Activated CD4-positive, alpha-beta memory T cell treated with anti-CD3 and anti-CD28 coated beads, Interleukin-2, amount 10 ng/mL, durations not matched to agents 7 days and 5 days (primary cell): ENCODE measurements at regions of chr2 and their contacts with region 1.

Region 1: DNA sequence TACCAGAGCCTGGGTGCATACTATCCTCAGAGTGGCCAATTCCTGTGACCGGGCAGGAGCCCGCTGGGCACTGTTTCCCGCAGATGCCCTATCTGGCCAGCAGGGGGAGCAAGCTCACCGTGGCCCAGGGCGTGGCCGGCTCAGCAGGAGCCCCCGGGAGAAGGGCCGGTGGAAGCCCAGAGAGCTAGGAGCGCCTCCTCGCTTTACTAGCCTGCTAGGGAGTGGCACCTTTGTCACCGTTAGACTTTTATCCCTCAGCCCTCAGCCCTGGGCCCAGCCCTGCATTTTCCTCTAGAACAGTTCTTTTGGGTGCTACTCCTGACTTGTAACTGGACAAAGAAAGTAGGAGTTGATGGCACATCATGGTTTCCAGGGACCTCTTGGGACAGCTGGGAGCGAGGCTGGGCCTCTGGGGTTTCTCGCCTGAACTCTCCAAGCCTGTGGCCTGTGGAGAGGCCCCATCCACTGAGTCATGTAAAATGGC is 24.0 kb downstream of the TMEM177 start:
- DNase-seq: peak; percentile 74
- H3K4me3 Mint-ChIP-seq: no peak overlapping the region
- H3K27ac Mint-ChIP-seq: no peak overlapping the region
- H3K4me1 Mint-ChIP-seq: peaks cover 24% of the 10 kb centered on the region
- H3K27me3 Mint-ChIP-seq: peaks cover 9% of the 10 kb centered on the region

Region 2: DNA sequence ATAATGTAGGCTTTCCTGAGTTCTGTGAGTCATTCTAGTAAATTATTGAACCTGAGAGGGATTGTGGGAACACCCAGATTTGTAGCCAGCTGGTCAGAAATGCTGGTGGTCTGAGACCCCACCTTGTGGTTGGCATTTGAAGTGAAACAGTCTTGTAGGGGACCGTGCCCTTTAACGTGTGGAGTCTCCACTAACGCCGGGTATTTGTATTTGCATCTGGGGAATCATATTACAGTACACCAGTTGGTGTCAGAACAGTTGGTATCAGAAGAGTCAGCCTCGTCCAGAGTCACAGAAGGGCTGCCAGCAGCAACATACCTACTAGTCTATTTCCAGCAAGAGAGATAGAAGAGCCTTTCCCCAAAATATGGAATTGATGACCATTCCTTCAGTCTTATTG is 18.5 kb after region 1 on chr2:
- CTCF ChIA-PET with region 1: interaction called, 26 read pairs
- POLR2A ChIA-PET with region 1: interaction called, 4 read pairs
- DNase-seq: no peak
- H3K4me3 Mint-ChIP-seq: no peak overlapping the region
- H3K27ac Mint-ChIP-seq: no peak overlapping the region
- H3K4me1 Mint-ChIP-seq: peaks cover 13% of the 10 kb centered on the region
- H3K27me3 Mint-ChIP-seq: no peaks in the 10 kb centered on the region